Activated naive CD4-positive, alpha-beta T cell treated with anti-CD3 and anti-CD28 coated beads for 36 hours (primary cell): ENCODE measurements at regions of chr14 and their contacts with region 1.

Region 1: GRCh38 chr14:69643443-69644164 is 32.2 kb downstream of the SUSD6 start:
- DNase-seq: peak; percentile 92
- H3K4me3 Mint-ChIP-seq: no peak overlapping the region
- H3K27ac Mint-ChIP-seq: peak overlapping the region; percentile 90
- H3K4me1 Mint-ChIP-seq: peaks cover 83% of the 10 kb centered on the region
- H3K27me3 Mint-ChIP-seq: no peaks in the 10 kb centered on the region

Region 2: DNA sequence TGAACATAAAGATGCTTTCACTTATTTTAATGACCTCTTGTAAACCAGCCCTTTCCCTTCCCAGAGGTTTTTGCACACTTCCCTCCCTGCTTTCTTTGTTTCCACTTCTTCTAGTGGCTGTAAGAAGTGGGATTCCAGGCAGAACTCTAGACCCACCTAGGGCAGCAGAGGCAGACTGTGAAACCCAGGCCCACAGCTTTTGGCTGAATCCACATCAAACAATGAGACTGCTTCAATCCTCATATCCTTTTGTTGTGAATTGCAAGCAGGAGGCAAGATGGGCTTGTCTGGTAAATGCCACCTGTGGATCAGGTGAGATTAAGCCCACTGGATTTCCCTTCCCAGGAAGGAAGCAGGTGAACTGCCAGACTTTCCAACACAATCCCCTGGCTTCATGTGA is 81.7 kb before region 1 on chr14:
- CTCF ChIA-PET with region 1: no interaction called
- intact Hi-C with region 1: no loop called
- DNase-seq: no peak
- H3K4me3 Mint-ChIP-seq: no peak overlapping the region
- H3K27ac Mint-ChIP-seq: no peak overlapping the region
- H3K4me1 Mint-ChIP-seq: no peaks in the 10 kb centered on the region
- H3K27me3 Mint-ChIP-seq: peaks cover 22% of the 10 kb centered on the region

Region 3: GRCh38 chr14:69611201-69612011 is 32.2 kb before region 1 on chr14 and contains the start of gene SUSD6:
- CTCF ChIA-PET with region 1: interaction called, 3 read pairs
- intact Hi-C with region 1: loop called (anchors 1 kb)
- DNase-seq: peak; percentile 88
- H3K4me3 Mint-ChIP-seq: peak within 1 kb of the TSS; percentile 92
- H3K27ac Mint-ChIP-seq: peak within 1 kb of the TSS; percentile 91
- H3K4me1 Mint-ChIP-seq: peaks cover 53% of the 10 kb centered on the region
- H3K27me3 Mint-ChIP-seq: no peaks in the 10 kb centered on the region
- total RNA-seq, gene SUSD6: 66.6 to 69.7 TPM

Region 4: GRCh38 chr14:69619012-69619411 is 24.6 kb before region 1 on chr14:
- CTCF ChIA-PET with region 1: interaction called, 3 read pairs
- intact Hi-C with region 1: loop called (anchors 1 kb)
- DNase-seq: no peak
- H3K4me3 Mint-ChIP-seq: peak overlapping the region; percentile 41
- H3K27ac Mint-ChIP-seq: peak overlapping the region; percentile 91
- H3K4me1 Mint-ChIP-seq: peaks cover 95% of the 10 kb centered on the region
- H3K27me3 Mint-ChIP-seq: no peaks in the 10 kb centered on the region

Region 5: DNA sequence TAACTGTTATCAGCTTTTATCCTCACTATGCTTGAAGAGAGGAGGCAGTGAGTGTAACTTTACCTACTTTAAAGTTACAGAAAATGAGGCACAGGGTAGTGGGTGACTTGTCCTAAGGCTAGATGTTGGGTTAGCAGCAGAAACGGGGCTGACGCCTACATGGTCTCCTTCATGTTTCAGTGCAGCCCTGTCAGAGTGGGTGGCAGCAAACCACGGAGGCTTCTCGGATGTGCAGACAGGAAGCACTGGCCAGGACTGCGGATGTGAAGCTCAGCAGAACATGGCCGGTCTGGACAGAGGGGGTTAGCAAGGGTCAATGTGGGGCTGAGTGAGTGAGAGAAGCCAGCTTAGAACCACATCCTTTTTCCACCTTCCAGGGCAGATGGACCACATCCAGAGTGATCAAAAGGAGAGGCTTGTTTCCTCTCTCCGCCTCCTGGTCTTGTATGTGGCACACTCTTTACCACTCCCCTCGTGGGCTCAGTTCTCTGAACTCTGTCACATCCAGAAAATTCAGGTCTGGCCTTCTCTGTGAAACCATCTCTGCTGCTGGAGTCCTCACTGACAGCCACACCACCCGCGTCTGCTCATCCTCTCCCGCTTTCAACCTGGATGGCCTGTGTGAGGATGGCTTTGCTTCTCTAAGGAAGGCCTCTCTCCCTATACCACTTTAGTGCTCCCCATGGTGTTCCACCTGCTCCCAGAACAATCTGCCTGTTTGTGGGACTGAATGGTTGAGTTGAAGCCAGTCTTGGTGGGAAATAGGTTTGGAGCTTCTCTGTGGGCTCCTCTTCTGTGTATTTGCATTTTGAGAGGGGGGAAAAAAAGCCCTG is 18.1 kb before region 1 on chr14:
- CTCF ChIA-PET with region 1: interaction called, 4 read pairs
- intact Hi-C with region 1: loop called (anchors 1 kb)
- DNase-seq: peak; percentile 84
- H3K4me3 Mint-ChIP-seq: peak overlapping the region; percentile 54
- H3K27ac Mint-ChIP-seq: peak overlapping the region; percentile 89
- H3K4me1 Mint-ChIP-seq: peaks cover 93% of the 10 kb centered on the region
- H3K27me3 Mint-ChIP-seq: no peaks in the 10 kb centered on the region

Region 6: DNA sequence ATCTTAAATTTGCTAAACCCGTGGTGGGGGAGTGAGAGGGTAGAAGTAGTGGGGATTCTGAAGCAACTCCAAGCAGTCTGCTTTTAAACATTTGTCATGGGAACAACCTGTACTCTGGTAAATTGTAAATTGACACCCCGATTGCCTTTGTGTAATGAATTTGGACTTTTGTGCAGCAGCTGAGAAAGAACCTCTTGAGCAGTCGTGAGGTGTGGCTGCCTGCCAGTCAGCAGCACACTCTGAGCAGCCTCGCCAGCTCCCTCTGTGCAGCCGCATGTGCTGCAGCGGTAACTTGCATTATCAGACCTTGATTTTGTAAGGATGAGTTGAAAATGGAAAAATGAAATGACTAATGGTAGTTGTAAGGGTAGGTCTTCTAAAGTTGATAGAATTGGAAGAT is 42.1 kb after region 1 on chr14:
- CTCF ChIA-PET with region 1: interaction called, 3 read pairs
- intact Hi-C with region 1: loop called (anchors 1 kb)
- DNase-seq: peak; percentile 75
- H3K4me3 Mint-ChIP-seq: peak overlapping the region; percentile 41
- H3K27ac Mint-ChIP-seq: peak overlapping the region; percentile 93
- H3K4me1 Mint-ChIP-seq: peaks cover 78% of the 10 kb centered on the region
- H3K27me3 Mint-ChIP-seq: no peaks in the 10 kb centered on the region

Region 7: GRCh38 chr14:69715725-69716477 is 72.3 kb after region 1 on chr14:
- CTCF ChIA-PET with region 1: interaction called, 3 read pairs
- intact Hi-C with region 1: loop called (anchors 2 kb)
- DNase-seq: no peak
- H3K4me3 Mint-ChIP-seq: no peak overlapping the region
- H3K27ac Mint-ChIP-seq: peak overlapping the region; percentile 50
- H3K4me1 Mint-ChIP-seq: peaks cover 40% of the 10 kb centered on the region
- H3K27me3 Mint-ChIP-seq: no peaks in the 10 kb centered on the region

Region 8: DNA sequence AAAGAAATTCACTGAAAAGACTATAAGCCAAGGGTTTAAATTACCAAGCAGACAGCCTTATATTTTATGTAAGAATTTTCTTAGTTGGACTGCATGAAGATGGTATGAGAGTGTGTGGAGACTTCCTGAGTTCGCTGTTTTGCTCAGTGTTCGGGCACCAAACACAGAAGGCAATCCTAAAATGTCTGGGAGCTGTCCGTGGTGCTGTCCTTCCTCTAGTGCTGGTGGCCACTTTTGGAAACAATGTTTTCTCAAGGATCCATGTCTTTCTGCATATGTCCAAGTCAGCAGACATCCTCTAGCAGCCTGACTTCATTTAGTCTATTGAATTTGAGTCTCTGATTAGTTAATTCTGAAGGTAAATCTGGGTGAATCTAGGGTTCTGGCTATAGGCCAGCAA is 409.4 kb after region 1 on chr14:
- CTCF ChIA-PET with region 1: no interaction called
- intact Hi-C with region 1: no loop called
- DNase-seq: peak; percentile 53
- H3K4me3 Mint-ChIP-seq: no peak overlapping the region
- H3K27ac Mint-ChIP-seq: no peak overlapping the region
- H3K4me1 Mint-ChIP-seq: peaks cover 6% of the 10 kb centered on the region
- H3K27me3 Mint-ChIP-seq: peaks cover 2% of the 10 kb centered on the region